ENCODE measurements at regions of chr16 and their contacts with region 1.

Region 1: DNA sequence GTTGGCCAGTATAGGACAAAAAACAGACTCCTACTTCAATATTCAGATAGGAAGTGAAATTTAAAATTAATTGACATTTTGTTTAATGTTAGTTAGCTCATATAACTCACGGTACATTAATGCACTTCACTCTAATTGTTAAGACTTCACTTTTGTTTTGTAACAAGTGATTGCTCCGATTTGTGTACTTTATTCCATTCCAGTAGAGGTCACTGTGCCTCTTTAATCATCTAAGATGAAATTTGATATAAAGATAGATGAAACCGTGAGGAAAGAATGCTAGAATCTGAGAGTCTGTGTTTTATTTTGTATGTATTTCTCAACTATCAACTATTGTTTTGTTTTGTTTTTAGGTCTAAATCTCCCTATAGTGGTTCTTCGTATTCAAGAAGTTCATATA is 29.0 kb downstream of the RBBP6 start:
- DNase-seq: no peak
- ATAC-seq: no peak

Region 2: DNA sequence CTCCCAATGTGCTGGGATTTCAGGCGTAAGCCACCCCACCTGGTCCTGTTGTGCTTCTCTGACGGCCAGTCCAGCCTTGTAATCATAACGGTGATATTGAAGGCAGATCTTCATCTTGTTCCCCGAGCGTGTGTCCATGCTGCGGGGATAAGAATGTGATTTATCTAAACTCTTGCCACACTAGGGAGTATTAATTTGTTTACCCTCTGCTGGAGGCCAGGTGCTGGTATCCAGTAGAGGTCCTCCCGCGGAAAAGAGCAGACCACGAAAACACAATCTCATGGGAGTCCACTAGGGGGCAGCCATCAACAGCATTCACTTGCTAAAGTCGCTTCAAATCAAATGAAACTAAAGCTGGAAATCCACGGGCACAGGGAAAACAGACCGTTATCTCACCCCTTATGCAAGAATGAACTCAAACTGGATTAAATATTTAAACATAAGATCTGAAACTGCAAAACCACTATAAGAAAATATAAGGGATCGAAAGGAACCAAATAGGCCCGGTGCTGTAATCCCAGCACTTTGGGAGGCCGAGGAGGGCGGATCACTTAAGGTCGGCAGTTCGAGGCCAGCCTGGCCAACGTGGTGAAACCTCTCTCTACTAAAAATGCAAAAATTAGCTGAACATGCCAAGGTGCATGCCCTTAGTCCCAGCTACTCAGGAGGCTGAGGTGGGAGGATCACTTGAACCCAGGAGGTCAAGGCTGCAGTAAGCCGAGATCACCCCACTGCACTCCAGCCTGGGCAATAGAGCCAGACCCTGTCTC is 51.3 kb before region 1 on chr16:
- intact Hi-C with region 1: no loop called
- DNase-seq: peak; percentile 72
- ATAC-seq: peak; percentile 86

Region 3: GRCh38 chr16:24800586-24800985 is 232.2 kb after region 1 on chr16:
- intact Hi-C with region 1: loop called (anchors 5 kb)
- DNase-seq: no peak
- ATAC-seq: no peak

Region 4: GRCh38 chr16:24950275-24950674 is 381.9 kb after region 1 on chr16:
- intact Hi-C with region 1: loop called (anchors 10 kb)
- DNase-seq: no peak
- ATAC-seq: no peak

Measured in Right ventricle myocardium inferior (tissue), 1 donor.